ENCODE measurements at regions of chr6 and their contacts with region 1.

Region 1: DNA sequence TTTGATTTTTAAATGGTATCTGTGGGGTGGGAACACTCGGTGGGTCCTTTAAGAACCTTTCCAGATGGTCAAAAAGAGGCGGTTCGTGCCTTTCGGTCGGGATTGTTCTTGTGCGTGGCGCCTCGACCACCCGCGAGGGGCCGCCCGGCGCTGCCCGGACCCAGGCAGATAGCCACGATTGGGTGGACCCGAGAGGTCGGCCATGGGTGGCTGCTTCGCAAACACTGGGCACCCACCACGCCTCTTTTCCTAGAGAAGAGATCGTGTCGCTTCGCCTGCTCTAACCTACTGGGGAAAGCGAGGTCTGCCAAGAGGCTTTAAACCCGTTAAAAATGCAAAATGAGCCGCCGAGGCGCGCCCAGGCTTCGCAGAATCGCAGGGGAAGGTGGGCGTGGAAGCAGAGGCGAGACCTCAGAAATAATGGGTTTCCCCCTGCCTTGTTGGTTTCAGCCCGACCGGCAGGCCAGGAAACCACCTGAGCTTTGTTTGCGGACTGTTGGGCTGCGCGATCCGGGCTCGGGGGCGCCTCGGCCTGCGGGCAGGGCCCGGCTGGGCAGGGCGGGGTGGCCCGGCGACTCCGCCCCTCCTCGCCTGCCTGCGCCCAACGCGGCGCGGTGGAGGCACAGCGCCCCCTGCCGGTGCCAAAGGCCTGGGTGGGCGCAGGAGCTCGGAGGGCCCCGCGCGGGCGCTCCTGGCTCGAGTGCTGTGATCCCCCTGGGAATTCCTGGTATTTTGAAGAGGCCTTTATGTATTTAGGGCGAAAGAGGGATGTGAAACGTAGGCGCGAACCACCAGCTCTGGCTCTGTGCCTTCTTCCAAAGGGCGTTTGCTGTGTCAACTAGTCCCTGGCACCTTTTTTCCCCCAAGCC is 1.6 kb downstream of the MARCKS start:
- DNase-seq: peak; percentile 87
- ATAC-seq: peak; percentile 69
- H3K4me3 ChIP-seq: peak overlapping the region; percentile 95
- H3K27ac ChIP-seq: peak overlapping the region; percentile 96
- H3K4me1 ChIP-seq: no peaks in the 10 kb centered on the region
- H3K27me3 ChIP-seq: no peaks in the 10 kb centered on the region
- CTCF ChIP-seq: peak; percentile 96
- POLR2A ChIP-seq: peak; percentile 71; the same call in 1 of the 2 replicates
- RAD21 ChIP-seq: peak; percentile 95

Region 2: GRCh38 chr6:112337209-112337638 is 1521.5 kb before region 1 on chr6:
- CTCF ChIA-PET with region 1: no interaction called
- POLR2A ChIA-PET with region 1: interaction called, 3 read pairs
- dilution Hi-C with region 1: no loop called
- in situ Hi-C with region 1: no loop called
- intact Hi-C with region 1: loop called (anchors 1 kb)
- DNase-seq: peak; percentile 83
- ATAC-seq: peak; percentile 91
- H3K4me3 ChIP-seq: no peak overlapping the region
- H3K27ac ChIP-seq: no peak overlapping the region
- H3K4me1 ChIP-seq: peaks cover 4% of the 10 kb centered on the region
- H3K27me3 ChIP-seq: no peaks in the 10 kb centered on the region
- CTCF ChIP-seq: peak; percentile 78
- POLR2A ChIP-seq: no peak
- RAD21 ChIP-seq: peak; percentile 80

Region 3: DNA sequence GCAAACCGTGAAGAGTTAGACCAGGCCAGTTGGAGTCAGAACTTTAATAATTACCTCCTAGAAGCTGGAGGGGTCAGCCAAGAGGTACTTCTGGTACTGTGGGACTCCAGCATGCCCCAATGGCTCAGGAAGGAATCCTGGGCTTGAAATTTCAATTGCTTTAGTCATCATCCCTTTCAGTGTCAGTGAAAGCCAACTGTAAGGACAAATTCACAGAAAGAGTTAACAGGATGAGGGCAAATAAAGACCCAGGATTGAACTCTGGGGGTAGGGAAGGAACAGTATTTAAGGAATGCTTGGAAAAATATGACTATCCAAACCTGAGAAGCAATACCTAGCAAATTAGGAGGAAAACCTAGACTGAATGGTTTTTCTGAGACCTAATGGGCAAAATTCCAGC is 736.7 kb before region 1 on chr6:
- CTCF ChIA-PET with region 1: interaction called, 5 read pairs
- POLR2A ChIA-PET with region 1: no interaction called
- dilution Hi-C with region 1: no loop called
- in situ Hi-C with region 1: no loop called
- intact Hi-C with region 1: loop called (anchors 1 kb)
- DNase-seq: peak; percentile 87
- ATAC-seq: peak; percentile 79
- H3K4me3 ChIP-seq: no peak overlapping the region
- H3K27ac ChIP-seq: no peak overlapping the region
- H3K4me1 ChIP-seq: peaks cover 13% of the 10 kb centered on the region
- H3K27me3 ChIP-seq: no peaks in the 10 kb centered on the region
- CTCF ChIP-seq: peak; percentile 56
- POLR2A ChIP-seq: no peak
- RAD21 ChIP-seq: peak; percentile 76

Region 4: GRCh38 chr6:113292646-113293422 is 565.9 kb before region 1 on chr6:
- CTCF ChIA-PET with region 1: no interaction called
- POLR2A ChIA-PET with region 1: no interaction called
- dilution Hi-C with region 1: no loop called
- in situ Hi-C with region 1: no loop called
- intact Hi-C with region 1: loop called (anchors 10 kb)
- DNase-seq: no peak
- ATAC-seq: no peak
- H3K4me3 ChIP-seq: no peak overlapping the region
- H3K27ac ChIP-seq: no peak overlapping the region
- H3K4me1 ChIP-seq: no peaks in the 10 kb centered on the region
- H3K27me3 ChIP-seq: no peaks in the 10 kb centered on the region
- CTCF ChIP-seq: no peak
- POLR2A ChIP-seq: no peak
- RAD21 ChIP-seq: no peak

Region 5: GRCh38 chr6:113433335-113433991 is 425.3 kb before region 1 on chr6:
- CTCF ChIA-PET with region 1: no interaction called
- POLR2A ChIA-PET with region 1: no interaction called
- dilution Hi-C with region 1: no loop called
- in situ Hi-C with region 1: no loop called
- intact Hi-C with region 1: loop called (anchors 1 kb)
- DNase-seq: peak; percentile 83
- ATAC-seq: peak; percentile 75
- H3K4me3 ChIP-seq: no peak overlapping the region
- H3K27ac ChIP-seq: peak overlapping the region; percentile 56; the same call in 1 of the 2 replicates
- H3K4me1 ChIP-seq: peaks cover 8% of the 10 kb centered on the region
- H3K27me3 ChIP-seq: no peaks in the 10 kb centered on the region
- CTCF ChIP-seq: no peak
- POLR2A ChIP-seq: no peak
- RAD21 ChIP-seq: no peak

Region 6: GRCh38 chr6:113632220-113632864 is 226.4 kb before region 1 on chr6:
- CTCF ChIA-PET with region 1: interaction called, 3 read pairs
- POLR2A ChIA-PET with region 1: interaction called, 3 read pairs
- dilution Hi-C with region 1: no loop called
- in situ Hi-C with region 1: no loop called
- intact Hi-C with region 1: loop called (anchors 5 kb)
- DNase-seq: peak; percentile 88
- ATAC-seq: peak; percentile 62
- H3K4me3 ChIP-seq: peak overlapping the region; percentile 32; the same call in 1 of the 2 replicates
- H3K27ac ChIP-seq: peak overlapping the region; percentile 63
- H3K4me1 ChIP-seq: peaks cover 25% of the 10 kb centered on the region
- H3K27me3 ChIP-seq: no peaks in the 10 kb centered on the region
- CTCF ChIP-seq: no peak
- POLR2A ChIP-seq: peak; percentile 50; the same call in 1 of the 2 replicates
- RAD21 ChIP-seq: 0 out of 2 replicates have a peak, but pooled peaks have one; percentile 11

Region 7: GRCh38 chr6:113909234-113909856 is 50.6 kb after region 1 on chr6:
- CTCF ChIA-PET with region 1: no interaction called
- POLR2A ChIA-PET with region 1: no interaction called
- dilution Hi-C with region 1: no loop called
- in situ Hi-C with region 1: no loop called
- intact Hi-C with region 1: loop called (anchors 1 kb)
- DNase-seq: peak; percentile 79
- ATAC-seq: peak; percentile 59
- H3K4me3 ChIP-seq: no peak overlapping the region
- H3K27ac ChIP-seq: no peak overlapping the region
- H3K4me1 ChIP-seq: peaks cover 2% of the 10 kb centered on the region
- H3K27me3 ChIP-seq: no peaks in the 10 kb centered on the region
- CTCF ChIP-seq: peak; percentile 76
- POLR2A ChIP-seq: no peak
- RAD21 ChIP-seq: peak; percentile 83